RWPE1 (cell line): ENCODE measurements at regions of chr2 and their contacts with region 1.

Region 1: DNA sequence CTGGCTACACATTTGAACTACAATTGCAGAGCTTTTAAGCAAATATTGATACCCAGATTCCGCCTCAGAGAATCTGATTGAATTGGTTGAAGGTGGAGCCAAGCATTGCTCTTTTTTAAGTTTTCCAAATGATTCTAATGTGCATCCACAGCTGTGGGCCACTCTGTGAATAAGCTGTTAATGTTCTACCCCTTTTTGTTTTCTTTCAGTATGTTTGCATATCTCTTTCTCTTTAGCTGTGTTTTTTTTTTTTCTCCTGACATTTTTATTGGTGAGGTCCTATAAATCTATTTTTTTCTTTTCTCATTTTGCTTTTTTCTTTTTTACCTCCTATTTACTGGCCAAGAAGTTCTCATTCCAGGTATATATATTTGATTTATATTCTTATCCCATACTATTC is 6.5 kb downstream of the SCN3A start:
- DNase-seq: no peak
- H3K27ac ChIP-seq: no peak overlapping the region
- CTCF ChIP-seq: no peak

Region 2: DNA sequence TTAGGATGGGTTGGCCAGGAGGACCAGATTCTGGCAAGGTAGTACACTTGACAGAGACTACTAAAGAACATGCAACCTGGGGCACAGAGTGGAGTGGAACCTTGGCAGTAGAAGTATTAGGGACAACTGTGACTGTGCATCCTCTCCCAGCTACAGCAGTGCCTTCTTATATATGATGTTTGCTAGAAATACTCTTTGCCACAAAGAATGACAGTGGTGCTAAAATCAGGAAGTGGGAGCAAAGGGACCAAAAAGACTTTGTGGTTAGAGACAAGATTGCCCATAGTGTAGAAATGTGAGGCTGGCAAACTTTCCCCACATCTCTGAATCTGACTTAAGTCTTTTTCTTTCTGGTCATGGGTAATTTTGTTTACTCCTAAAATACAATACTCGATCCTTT is 232.6 kb before region 1 on chr2:
- CTCF ChIA-PET with region 1: interaction called, 10 read pairs
- POLR2A ChIA-PET with region 1: no interaction called
- DNase-seq: no peak
- H3K27ac ChIP-seq: no peak overlapping the region
- CTCF ChIP-seq: no peak

Region 3: GRCh38 chr2:165079432-165079831 is 117.9 kb before region 1 on chr2:
- CTCF ChIA-PET with region 1: no interaction called
- POLR2A ChIA-PET with region 1: no interaction called
- DNase-seq: no peak
- H3K27ac ChIP-seq: no peak overlapping the region
- CTCF ChIP-seq: no peak

Region 4: GRCh38 chr2:165182029-165182428 is 15.3 kb before region 1 on chr2:
- CTCF ChIA-PET with region 1: no interaction called
- POLR2A ChIA-PET with region 1: no interaction called
- DNase-seq: no peak
- H3K27ac ChIP-seq: no peak overlapping the region
- CTCF ChIP-seq: no peak